Naive thymus-derived CD8-positive, alpha-beta T cell (primary cell): ENCODE measurements at regions of chr9 and their contacts with region 1.

Region 1: GRCh38 chr9:97982683-97983588 is at the start of gene ANP32B:
- DNase-seq: peak; percentile 92 to 97 (median 94)
- ATAC-seq: peak; percentile 74 to 82
- H3K4me3 Mint-ChIP-seq: peak within 1 kb of the TSS; percentile 78 to 94 (median 84)
- H3K27ac Mint-ChIP-seq: peak within 1 kb of the TSS; percentile 18 to 96 (median 91)
- H3K4me1 Mint-ChIP-seq: peaks cover 26 to 61% (median 52%) of the 10 kb centered on the region in 4 donors
- H3K27me3 Mint-ChIP-seq: no peaks in the 10 kb centered on the region
- polyA plus RNA-seq, gene ANP32B: 87.8 to 110 (median 108) TPM

Region 2: GRCh38 chr9:97632985-97633858 is 349.7 kb before region 1 on chr9 and contains the starts of genes NCBP1 and TSTD2:
- POLR2A ChIA-PET with region 1: interaction called, 12 read pairs
- DNase-seq: peak; percentile 89 to 98 (median 96)
- ATAC-seq: peak; percentile 87 to 90
- H3K4me3 Mint-ChIP-seq: peak within 1 kb of the TSS; percentile 90 to 100 (median 98)
- H3K27ac Mint-ChIP-seq: peak within 1 kb of the TSS; percentile 95 to 100 (median 99)
- H3K4me1 Mint-ChIP-seq: peaks cover 40 to 77% (median 61%) of the 10 kb centered on the region in 4 donors
- H3K27me3 Mint-ChIP-seq: no peaks in the 10 kb centered on the region
- polyA plus RNA-seq, gene NCBP1: 17.9 to 19.7 (median 18.1) TPM
- polyA plus RNA-seq, gene TSTD2: 7.0 to 8.9 (median 7.3) TPM

Region 3: DNA sequence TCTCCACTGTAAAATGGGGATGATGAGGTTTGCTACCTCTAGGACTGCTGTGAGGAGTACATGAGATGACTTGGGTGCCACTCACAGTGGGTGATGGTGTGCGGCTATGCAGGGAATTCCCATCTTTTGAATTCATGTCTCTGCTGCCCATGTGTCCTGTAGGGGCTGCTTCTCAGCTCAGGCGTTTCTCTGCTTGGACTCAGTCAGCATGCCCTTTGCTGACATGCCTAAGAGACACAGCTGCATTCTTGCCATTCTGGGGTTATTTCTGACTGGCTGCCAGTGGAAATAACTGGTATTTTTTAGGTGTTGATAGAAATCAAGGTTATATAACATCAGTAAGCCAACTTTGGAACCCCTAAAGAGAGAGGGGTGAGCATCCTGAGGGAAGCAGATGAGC is 261.5 kb before region 1 on chr9:
- POLR2A ChIA-PET with region 1: no interaction called
- DNase-seq: no peak
- ATAC-seq: no peak
- H3K4me3 Mint-ChIP-seq: no peak overlapping the region
- H3K27ac Mint-ChIP-seq: no peak overlapping the region
- H3K4me1 Mint-ChIP-seq: no peaks in the 10 kb centered on the region
- H3K27me3 Mint-ChIP-seq: peaks cover 2 to 16% (median 9%) of the 10 kb centered on the region in 5 donors

Region 4: GRCh38 chr9:97934321-97935115 is 48.4 kb before region 1 on chr9:
- POLR2A ChIA-PET with region 1: interaction called, 25 read pairs
- DNase-seq: no peak
- ATAC-seq: no peak
- H3K4me3 Mint-ChIP-seq: peak overlapping the region in 1 of 10 donors; percentile 23
- H3K27ac Mint-ChIP-seq: peak overlapping the region in 8 of 10 donors; percentile 9 to 80 (median 47)
- H3K4me1 Mint-ChIP-seq: peaks cover 30 to 78% (median 69%) of the 10 kb centered on the region in 4 donors
- H3K27me3 Mint-ChIP-seq: no peaks in the 10 kb centered on the region

Region 5: DNA sequence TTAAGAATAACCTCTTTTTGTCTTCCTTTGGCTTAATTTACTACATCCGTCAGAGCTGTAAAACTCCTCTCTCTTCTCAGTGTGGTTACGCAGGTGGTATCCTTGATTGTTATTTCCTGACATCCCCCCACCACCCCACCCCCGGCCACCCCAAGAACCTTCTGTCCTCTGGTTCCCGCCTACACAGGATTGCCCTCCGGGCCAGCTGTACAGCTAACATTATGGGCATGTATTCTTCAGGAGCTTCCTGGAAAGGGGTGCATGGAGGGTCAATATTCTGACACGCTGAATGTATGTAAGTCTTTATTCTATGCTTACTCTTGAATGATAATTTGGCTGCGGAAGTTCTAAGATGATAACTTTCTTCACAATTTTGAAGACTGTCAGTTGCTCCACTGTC is 12.8 kb before region 1 on chr9:
- POLR2A ChIA-PET with region 1: interaction called, 14 read pairs
- DNase-seq: peak in 2 of 10 donors; percentile 37 to 49
- ATAC-seq: peak; percentile 65 to 83
- H3K4me3 Mint-ChIP-seq: peak overlapping the region; percentile 34 to 86 (median 72)
- H3K27ac Mint-ChIP-seq: peak overlapping the region; percentile 55 to 93 (median 85)
- H3K4me1 Mint-ChIP-seq: peaks cover 5 to 13% (median 10%) of the 10 kb centered on the region in 4 donors
- H3K27me3 Mint-ChIP-seq: no peaks in the 10 kb centered on the region

Region 6: GRCh38 chr9:98034593-98035546 is 51.9 kb after region 1 on chr9:
- POLR2A ChIA-PET with region 1: interaction called, 16 read pairs
- DNase-seq: peak; percentile 76 to 95 (median 87)
- ATAC-seq: peak; percentile 100
- H3K4me3 Mint-ChIP-seq: peak overlapping the region; percentile 16 to 58 (median 40)
- H3K27ac Mint-ChIP-seq: peak overlapping the region in 7 of 10 donors; percentile 48 to 88 (median 68)
- H3K4me1 Mint-ChIP-seq: peaks cover 3 to 11% (median 8%) of the 10 kb centered on the region in 4 donors
- H3K27me3 Mint-ChIP-seq: peaks cover 0 to 3% (median 1%) of the 10 kb centered on the region in 5 donors

Region 7: GRCh38 chr9:98056269-98057137 is 73.6 kb after region 1 on chr9 and contains the start of gene NANS:
- POLR2A ChIA-PET with region 1: interaction called, 22 read pairs
- DNase-seq: peak; percentile 86 to 95 (median 88)
- ATAC-seq: peak; percentile 92 to 93
- H3K4me3 Mint-ChIP-seq: peak within 1 kb of the TSS; percentile 90 to 99 (median 96)
- H3K27ac Mint-ChIP-seq: peak within 1 kb of the TSS; percentile 88 to 98 (median 96)
- H3K4me1 Mint-ChIP-seq: peaks cover 8 to 35% (median 25%) of the 10 kb centered on the region in 4 donors
- H3K27me3 Mint-ChIP-seq: no peaks in the 10 kb centered on the region
- polyA plus RNA-seq, gene NANS: 28.9 to 32.4 (median 30.9) TPM

Region 8: DNA sequence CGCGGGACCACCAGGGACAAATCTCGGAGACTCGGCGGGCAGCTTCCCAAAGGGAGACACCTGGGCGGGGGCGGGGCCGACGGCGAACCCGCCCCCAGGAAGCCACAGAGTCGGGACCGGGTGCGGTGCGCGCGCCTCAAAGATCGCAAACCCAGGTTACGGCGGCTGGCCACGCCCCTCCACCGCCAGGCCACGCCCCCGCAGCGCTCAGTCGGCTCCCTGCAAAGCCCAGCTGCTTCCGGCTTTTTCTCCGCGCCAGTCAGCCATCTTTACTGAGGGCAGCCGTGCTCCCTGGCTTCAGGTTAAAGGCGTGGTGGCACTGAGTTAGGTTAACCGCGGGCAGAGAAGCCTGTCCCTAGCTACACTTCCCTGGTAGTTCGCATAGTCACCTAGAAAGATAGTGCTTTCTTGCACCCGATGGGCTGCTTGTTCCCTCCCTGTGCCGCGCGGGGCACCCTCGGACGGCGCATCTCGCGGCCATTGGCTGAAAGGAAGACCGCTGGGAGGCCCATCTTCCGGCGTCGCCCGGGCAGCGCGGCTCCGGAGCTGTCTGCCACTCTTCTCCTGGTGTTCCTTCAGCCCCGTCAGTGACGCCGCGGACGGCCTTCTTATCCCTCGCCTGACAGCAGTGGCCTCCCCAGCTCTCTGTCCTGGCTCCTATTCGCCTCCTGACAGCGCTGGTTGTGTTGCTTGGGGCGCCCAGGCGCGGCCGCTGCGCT is 272.8 kb after region 1 on chr9 and contains the start of gene TBC1D2:
- POLR2A ChIA-PET with region 1: interaction called, 36 read pairs
- DNase-seq: peak; percentile 95 to 99 (median 98)
- ATAC-seq: peak; percentile 85 to 87
- H3K4me3 Mint-ChIP-seq: peak within 1 kb of the TSS; percentile 93 to 98 (median 96)
- H3K27ac Mint-ChIP-seq: peak within 1 kb of the TSS; percentile 94 to 98 (median 96)
- H3K4me1 Mint-ChIP-seq: peaks cover 19 to 40% (median 35%) of the 10 kb centered on the region in 4 donors
- H3K27me3 Mint-ChIP-seq: no peaks in the 10 kb centered on the region
- polyA plus RNA-seq, gene TBC1D2: 2.0 to 5.9 (median 2.8) TPM